Mammary epithelial cell (primary cell): ENCODE measurements at regions of chr4 and their contacts with region 1.

Region 1: DNA sequence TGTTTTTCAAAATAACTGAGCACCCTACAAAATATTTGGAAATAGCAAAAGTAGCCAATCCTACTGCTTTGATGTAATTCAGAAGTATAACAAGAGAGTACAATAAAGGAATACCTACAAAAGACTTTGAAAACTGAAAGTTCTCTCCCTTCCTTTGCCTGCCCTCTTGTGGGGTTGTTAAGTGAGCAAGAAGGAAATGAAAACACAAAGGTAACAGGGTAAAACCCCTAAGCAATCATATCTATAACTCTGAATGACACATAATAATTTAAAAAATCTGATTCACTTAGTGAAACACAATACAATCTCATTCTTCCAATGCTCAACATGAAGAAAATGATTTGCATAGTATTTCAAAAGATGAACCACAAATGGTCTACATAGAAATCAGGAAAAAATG is 98.2 kb downstream of the FRYL start:
- DNase-seq: peak; percentile 50
- H3K4me3 ChIP-seq: no peak overlapping the region
- H3K27ac ChIP-seq: no peak overlapping the region
- H3K4me1 ChIP-seq: no peaks in the 10 kb centered on the region
- H3K27me3 ChIP-seq: no peaks in the 10 kb centered on the region
- CTCF ChIP-seq: peak; percentile 38 to 69

Region 2: DNA sequence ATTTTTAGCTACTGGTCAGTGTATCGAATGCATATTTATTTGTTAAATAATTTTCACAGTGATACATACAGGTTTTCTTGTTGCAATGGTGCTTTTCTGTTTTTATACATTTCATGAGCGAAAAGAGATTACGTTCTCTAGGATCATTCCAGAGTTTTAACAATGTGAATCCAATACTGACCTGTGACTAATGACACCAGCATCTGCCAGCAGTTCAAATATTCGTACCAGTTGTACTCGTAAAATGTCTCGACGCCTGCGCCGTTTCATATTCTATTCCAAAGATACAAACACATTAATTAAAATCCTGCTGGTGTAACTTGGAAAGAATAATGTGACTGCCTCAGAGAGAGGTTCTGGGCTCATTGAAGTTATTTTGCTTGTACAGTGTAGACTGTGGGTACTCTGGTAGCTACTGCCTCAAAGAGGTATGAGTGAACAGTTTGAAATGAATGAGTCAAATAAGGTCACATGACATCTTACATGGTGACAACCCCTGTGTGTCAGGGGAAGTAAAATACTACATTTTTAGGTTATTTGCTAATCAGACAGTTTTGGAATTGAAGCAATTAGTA is 111.1 kb before region 1 on chr4:
- CTCF ChIA-PET with region 1: no interaction called
- dilution Hi-C with region 1: no loop called
- in situ Hi-C with region 1: no loop called
- intact Hi-C with region 1: loop called (anchors 2 kb)
- DNase-seq: peak; percentile 38
- H3K4me3 ChIP-seq: no peak overlapping the region
- H3K27ac ChIP-seq: no peak overlapping the region
- H3K4me1 ChIP-seq: no peaks in the 10 kb centered on the region
- H3K27me3 ChIP-seq: no peaks in the 10 kb centered on the region
- CTCF ChIP-seq: no peak

Region 3: GRCh38 chr4:48772556-48772955 is 90.7 kb after region 1 on chr4:
- CTCF ChIA-PET with region 1: no interaction called
- dilution Hi-C with region 1: no loop called
- in situ Hi-C with region 1: no loop called
- intact Hi-C with region 1: no loop called
- DNase-seq: no peak
- H3K4me3 ChIP-seq: no peak overlapping the region
- H3K27ac ChIP-seq: no peak overlapping the region
- H3K4me1 ChIP-seq: peaks cover 15% of the 10 kb centered on the region
- H3K27me3 ChIP-seq: no peaks in the 10 kb centered on the region
- CTCF ChIP-seq: no peak